ENCODE measurements at regions of chr13 and their contacts with region 1.

Region 1: GRCh38 chr13:36736119-36736726 is 62.4 kb downstream of the SERTM1 start:
- DNase-seq: peak in 2 of 3 donors; percentile 23 to 45
- ATAC-seq: no peak
- H3K4me3 ChIP-seq: no peak overlapping the region
- H3K27ac ChIP-seq: no peak overlapping the region
- H3K4me1 ChIP-seq: no peaks in the 10 kb centered on the region
- H3K27me3 ChIP-seq: no peaks in the 10 kb centered on the region

Region 2: DNA sequence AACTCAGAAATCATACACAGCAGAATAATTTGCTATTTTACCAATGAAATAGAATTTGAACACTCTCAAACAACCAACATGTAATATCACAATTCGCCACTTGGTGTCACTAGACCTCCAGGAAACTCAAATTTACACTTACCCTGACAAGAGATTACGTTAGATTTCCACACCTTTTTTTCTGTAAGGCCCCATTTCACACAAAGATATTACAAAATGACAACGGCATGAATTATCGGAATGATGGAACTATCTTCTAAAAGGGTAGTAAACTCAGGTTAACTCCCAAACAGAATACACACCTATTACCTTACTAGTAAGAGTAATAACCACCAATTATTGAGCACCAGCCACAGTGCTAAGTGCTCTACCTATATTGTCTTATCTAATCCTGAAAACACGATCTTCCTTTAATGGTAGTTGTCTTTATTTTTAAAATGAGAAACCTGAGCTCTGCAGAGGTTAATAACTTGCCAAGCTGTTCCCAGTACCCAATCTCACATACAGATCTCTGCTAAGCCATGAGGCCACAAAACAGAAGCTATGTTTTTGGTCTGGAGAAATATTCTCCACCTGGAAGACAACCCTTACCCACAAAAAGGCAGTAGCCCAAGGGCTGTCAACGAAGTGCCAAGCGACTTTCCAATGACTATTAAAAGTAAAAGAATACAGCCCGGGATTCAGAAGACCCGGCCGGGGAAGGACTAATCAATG is 757.5 kb before region 1 on chr13:
- intact Hi-C with region 1: loop called in 1 of 4 experiments (anchors 10 kb)
- DNase-seq: no peak
- ATAC-seq: peak; percentile 34 to 61
- H3K4me3 ChIP-seq: no peak overlapping the region
- H3K27ac ChIP-seq: peak overlapping the region; percentile 69
- H3K4me1 ChIP-seq: no peaks in the 10 kb centered on the region
- H3K27me3 ChIP-seq: no peaks in the 10 kb centered on the region

Region 3: DNA sequence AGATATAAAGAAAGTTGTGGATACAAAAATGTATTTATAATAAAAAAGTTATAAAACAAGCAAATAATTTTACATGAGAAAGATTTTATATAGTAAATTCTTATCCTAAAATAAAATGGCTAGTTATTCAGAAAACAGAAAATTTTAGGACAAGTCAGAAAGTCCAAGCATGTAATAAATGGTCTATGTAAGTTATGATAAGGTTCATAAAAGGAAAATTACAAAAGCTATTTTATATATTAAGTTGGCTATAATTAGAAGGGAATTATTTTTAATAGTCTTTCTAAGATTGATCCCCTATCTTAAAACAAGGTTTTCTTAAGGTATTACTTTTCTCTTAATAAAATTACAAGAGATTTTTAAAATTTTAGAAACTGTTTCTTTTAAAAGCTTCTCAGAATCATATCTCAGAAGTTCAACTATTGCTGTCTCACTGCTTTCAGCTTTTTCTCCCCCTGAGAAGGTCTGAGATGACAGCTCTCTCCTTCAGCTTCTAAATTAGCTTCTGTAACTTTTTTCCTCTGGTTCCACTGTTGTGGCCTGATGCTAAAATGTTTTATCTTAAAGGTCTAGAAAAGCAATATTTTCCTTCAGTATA is 447.3 kb before region 1 on chr13:
- intact Hi-C with region 1: loop called in 1 of 4 experiments (anchors 5 kb)
- DNase-seq: no peak
- ATAC-seq: no peak
- H3K4me3 ChIP-seq: no peak overlapping the region
- H3K27ac ChIP-seq: no peak overlapping the region
- H3K4me1 ChIP-seq: no peaks in the 10 kb centered on the region
- H3K27me3 ChIP-seq: no peaks in the 10 kb centered on the region

Region 4: GRCh38 chr13:36453516-36453915 is 282.7 kb before region 1 on chr13:
- intact Hi-C with region 1: loop called in 3 of 4 experiments (anchors 2 to 5 kb)
- DNase-seq: no peak
- ATAC-seq: peak; percentile 42 to 68
- H3K4me3 ChIP-seq: no peak overlapping the region
- H3K27ac ChIP-seq: no peak overlapping the region
- H3K4me1 ChIP-seq: no peaks in the 10 kb centered on the region
- H3K27me3 ChIP-seq: no peaks in the 10 kb centered on the region

Measured in right cardiac atrium (tissue), 5 donors.